Left cardiac atrium (tissue), 4 donors: ENCODE measurements at regions of chrX and their contacts with region 1.

Region 1: GRCh38 chrX:151419782-151420181 is 22.8 kb downstream of the VMA21 start:
- DNase-seq: no peak
- ATAC-seq: no peak

Region 2: GRCh38 chrX:151478058-151478457 is 58.3 kb after region 1 on chrX:
- intact Hi-C with region 1: loop called in 1 of 2 experiments (anchors 10 kb)
- DNase-seq: no peak
- ATAC-seq: no peak